GM18951 (cell line): ENCODE measurements at regions of chr13 and their contacts with region 1.

Region 1: GRCh38 chr13:40682449-40683240 is 16.2 kb upstream of the FOXO1 start:
- POLR2A ChIP-seq: no peak

Region 2: DNA sequence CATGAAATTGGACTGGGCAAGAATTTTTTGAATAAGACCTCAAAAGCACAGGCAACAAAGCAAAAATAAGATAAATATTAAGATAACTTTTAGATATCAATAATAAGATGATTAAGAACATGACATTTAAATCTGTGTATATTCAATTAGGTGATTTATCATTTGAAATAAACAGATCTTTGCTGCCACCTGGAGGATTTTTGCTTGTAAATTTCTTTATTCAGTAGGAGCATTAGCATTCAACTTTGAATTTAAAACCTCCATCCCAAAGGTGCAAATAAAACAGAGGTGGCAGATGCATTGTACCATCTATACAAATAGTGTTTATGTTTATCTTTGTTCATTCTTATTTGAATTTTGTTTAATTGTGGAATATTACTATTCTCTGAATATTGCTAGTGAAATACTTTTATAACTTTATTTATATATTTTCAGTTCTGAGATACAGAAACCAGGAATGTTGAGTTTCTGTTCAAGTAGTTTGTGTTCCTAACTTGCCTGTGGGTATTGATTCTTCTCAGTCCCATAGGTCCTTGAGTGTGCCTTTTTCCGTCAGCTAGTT is 1006.2 kb before region 1 on chr13:
- in situ Hi-C with region 1: loop called (anchors 25 kb)
- POLR2A ChIP-seq: no peak

Region 3: DNA sequence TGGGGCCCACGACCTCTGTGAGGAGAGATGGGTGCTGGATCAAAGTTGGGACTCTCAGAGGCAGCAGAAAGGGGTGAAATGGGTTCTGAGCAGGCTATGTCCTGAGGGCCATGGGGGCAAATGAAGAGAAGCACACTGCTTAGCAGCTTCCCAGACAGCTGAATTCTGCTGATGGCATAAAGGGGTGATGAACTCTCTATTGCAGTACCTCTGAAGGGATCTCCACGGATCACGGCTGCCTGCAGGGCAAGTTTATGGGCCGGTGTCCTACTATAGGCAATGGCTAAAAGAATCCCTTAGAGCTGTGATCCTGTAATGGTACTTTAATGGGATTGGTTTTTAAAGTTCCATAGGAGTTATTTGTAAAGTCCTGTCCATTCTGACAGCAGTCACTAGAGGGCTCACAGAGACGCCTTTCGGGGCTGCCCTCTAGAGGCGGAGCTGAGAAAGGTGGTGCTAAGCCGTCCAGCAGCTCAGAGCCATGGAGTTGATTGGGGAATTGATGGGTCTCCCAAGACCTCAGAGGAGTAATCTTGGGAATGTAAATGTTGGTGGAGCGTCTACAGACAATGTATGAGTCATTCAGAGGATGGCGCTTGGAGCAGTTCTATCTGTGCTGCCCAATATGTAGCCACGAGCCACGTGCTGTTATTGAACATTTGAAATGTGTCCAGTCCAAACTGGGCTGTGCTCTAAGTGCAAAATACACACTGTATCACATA is 739.9 kb before region 1 on chr13:
- in situ Hi-C with region 1: loop called (anchors 25 kb)
- POLR2A ChIP-seq: no peak

Region 4: GRCh38 chr13:40069173-40070044 is 613.2 kb before region 1 on chr13:
- in situ Hi-C with region 1: loop called (anchors 5 kb)
- POLR2A ChIP-seq: no peak

Region 5: DNA sequence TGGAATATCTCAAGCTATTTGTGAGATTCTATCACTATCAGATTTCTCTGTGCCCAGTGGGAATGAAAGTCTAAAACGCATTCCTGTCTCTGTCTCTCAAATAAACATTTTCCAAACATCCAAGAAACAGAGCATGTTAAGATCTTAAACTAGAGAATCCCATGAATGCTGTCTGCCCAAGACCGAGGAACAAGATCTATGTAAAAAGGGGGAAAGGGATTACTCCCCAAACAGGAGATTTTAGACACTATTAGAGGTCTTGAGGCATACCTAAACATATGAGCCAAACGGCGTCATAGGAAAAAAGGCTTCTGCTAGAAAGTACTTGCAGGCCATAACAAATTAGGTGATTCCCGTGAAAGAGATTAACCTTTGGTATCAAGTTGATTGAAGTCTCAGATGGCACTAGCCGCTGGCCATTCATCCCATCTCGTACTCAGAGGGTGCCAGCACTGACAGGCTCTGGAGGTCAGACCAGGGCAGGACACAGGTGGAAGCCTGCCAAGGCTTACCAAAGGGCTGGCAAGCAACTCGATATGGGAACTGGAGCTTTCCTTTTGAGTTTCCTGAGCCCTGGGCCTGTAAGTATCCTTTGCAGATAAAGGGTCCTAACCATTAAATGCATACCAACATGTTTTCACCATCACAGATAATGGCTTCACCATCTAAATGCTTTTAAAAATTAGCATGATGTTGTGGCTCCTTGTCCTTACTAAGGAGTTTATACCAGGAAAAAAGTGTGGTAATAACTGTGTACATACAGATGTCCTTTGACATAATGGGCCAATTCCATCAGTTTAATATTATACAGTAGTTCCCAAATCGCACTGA is 241.4 kb before region 1 on chr13:
- in situ Hi-C with region 1: loop called (anchors 5 kb)
- POLR2A ChIP-seq: no peak